PC-3 (cell line): ENCODE measurements at regions of chr2 and their contacts with region 1.

Region 1: GRCh38 chr2:238644095-238645081 is 203.5 kb upstream of the TWIST2 start:
- DNase-seq: peak; percentile 77
- ATAC-seq: peak; percentile 91
- H3K4me3 ChIP-seq: peak overlapping the region; percentile 11; the same call in 1 of the 2 replicates
- H3K27ac ChIP-seq: peak overlapping the region; percentile 95
- H3K4me1 ChIP-seq: peaks cover 32% of the 10 kb centered on the region
- H3K27me3 ChIP-seq: no peaks in the 10 kb centered on the region
- CTCF ChIP-seq: no peak

Region 2: DNA sequence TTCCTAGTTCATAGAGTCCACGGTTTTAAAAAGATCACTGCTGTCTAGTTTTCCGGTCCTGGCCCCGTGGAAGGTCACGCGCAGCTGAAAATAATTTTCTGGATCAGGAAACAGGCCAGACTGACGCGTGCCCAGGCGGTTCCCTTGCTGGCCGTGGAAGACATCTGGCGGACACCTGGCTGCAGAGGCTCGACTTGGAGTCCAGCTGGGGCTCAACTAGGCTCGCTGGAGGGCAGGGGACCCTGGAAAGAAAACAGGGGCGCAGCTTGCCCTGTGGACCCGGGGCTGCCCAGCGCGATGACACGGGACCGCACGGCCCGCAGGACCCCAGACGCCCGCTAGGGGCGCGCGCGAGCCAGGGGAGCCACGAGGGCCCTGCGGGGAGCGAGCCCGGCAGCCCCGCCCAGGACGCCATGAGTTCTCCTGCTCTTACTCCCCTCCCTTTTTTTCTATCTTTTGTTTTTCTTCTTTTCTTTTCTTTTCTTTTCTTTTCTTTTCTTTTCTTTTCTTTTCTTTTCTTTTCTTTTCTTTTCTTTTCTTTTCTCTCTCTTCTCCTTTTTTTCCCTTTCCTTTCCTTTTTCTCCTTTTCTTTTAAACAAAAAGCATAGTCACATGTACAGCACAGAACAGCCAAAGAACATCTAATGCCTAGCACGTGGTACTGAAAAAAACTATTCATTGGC is 720.8 kb before region 1 on chr2:
- CTCF ChIA-PET with region 1: no interaction called
- POLR2A ChIA-PET with region 1: no interaction called
- intact Hi-C with region 1: no loop called
- DNase-seq: no peak
- ATAC-seq: no peak
- H3K4me3 ChIP-seq: no peak overlapping the region
- H3K27ac ChIP-seq: no peak overlapping the region
- H3K4me1 ChIP-seq: peaks cover 10% of the 10 kb centered on the region; the same call in 1 of the 2 replicates
- H3K27me3 ChIP-seq: no peaks in the 10 kb centered on the region
- CTCF ChIP-seq: no peak

Region 3: GRCh38 chr2:238585836-238586821 is 58.3 kb before region 1 on chr2:
- CTCF ChIA-PET with region 1: no interaction called
- POLR2A ChIA-PET with region 1: no interaction called
- intact Hi-C with region 1: no loop called
- DNase-seq: no peak
- ATAC-seq: no peak
- H3K4me3 ChIP-seq: no peak overlapping the region
- H3K27ac ChIP-seq: no peak overlapping the region
- H3K4me1 ChIP-seq: no peaks in the 10 kb centered on the region
- H3K27me3 ChIP-seq: no peaks in the 10 kb centered on the region
- CTCF ChIP-seq: no peak

Region 4: GRCh38 chr2:238601433-238602222 is 42.8 kb before region 1 on chr2:
- CTCF ChIA-PET with region 1: no interaction called
- POLR2A ChIA-PET with region 1: no interaction called
- intact Hi-C with region 1: no loop called
- DNase-seq: peak; percentile 12
- ATAC-seq: no peak
- H3K4me3 ChIP-seq: no peak overlapping the region
- H3K27ac ChIP-seq: no peak overlapping the region
- H3K4me1 ChIP-seq: peaks cover 16% of the 10 kb centered on the region
- H3K27me3 ChIP-seq: no peaks in the 10 kb centered on the region
- CTCF ChIP-seq: no peak

Region 5: DNA sequence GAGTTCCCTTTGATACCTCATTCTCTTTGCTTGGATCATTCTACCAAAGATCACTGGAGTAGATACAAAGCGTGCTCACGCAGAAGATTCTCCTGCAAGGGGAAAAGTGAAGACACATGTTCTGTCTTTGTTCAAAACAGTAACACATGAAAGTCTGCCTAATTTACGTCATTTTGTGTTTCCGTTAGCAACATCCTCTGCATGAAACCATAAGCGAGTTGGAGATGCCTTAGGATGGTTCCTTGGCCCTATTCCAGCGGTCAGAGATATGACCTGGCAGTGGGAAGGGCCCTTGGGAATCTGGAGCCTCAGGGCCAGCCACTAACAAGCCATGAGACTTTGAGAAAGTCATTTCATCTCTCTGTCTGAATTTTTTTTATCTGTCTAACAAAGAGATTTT is 22.6 kb after region 1 on chr2:
- CTCF ChIA-PET with region 1: no interaction called
- POLR2A ChIA-PET with region 1: no interaction called
- intact Hi-C with region 1: no loop called
- DNase-seq: no peak
- ATAC-seq: no peak
- H3K4me3 ChIP-seq: no peak overlapping the region
- H3K27ac ChIP-seq: no peak overlapping the region
- H3K4me1 ChIP-seq: no peaks in the 10 kb centered on the region
- H3K27me3 ChIP-seq: no peaks in the 10 kb centered on the region
- CTCF ChIP-seq: no peak

Region 6: GRCh38 chr2:238684362-238685326 is 40.3 kb after region 1 on chr2:
- CTCF ChIA-PET with region 1: no interaction called
- POLR2A ChIA-PET with region 1: no interaction called
- intact Hi-C with region 1: loop called (anchors 5 kb)
- DNase-seq: peak; percentile 97
- ATAC-seq: peak; percentile 98
- H3K4me3 ChIP-seq: peak overlapping the region; percentile 12; the same call in 1 of the 2 replicates
- H3K27ac ChIP-seq: peak overlapping the region; percentile 92
- H3K4me1 ChIP-seq: peaks cover 28% of the 10 kb centered on the region
- H3K27me3 ChIP-seq: no peaks in the 10 kb centered on the region
- CTCF ChIP-seq: no peak